ENCODE measurements at regions of chr11 and their contacts with region 1.

Region 1: GRCh38 chr11:36452236-36452940 is 57.7 kb downstream of the TRAF6 start:
- DNase-seq: no peak
- H3K4me3 Mint-ChIP-seq: peak overlapping the region; percentile 53
- H3K27ac Mint-ChIP-seq: peak overlapping the region; percentile 70
- H3K4me1 Mint-ChIP-seq: peaks cover 55% of the 10 kb centered on the region
- H3K27me3 Mint-ChIP-seq: peaks cover 6% of the 10 kb centered on the region

Region 2: DNA sequence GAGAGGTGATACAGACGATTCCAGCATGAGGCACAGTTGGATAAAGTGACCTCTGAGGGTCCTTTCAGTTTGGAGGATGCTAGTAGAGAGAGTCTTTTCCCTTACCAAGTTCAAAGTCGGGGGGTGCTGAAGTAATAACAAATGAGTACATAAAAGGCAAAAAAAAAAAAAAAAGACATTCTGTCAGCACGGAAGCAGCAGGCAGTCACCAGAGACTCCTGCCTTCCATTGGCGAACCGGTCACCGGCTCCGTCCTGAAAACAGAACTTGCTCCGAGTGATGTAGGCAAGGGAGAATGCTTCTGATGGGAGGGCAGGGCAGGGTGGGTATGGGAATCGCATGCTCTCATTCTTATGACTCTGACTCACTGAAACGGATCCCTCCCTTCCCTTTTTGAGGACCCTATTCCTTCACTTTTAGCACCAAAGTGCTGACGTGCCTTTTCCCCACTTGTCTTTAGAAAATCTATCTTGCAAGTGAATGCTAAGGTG is 90.4 kb before region 1 on chr11:
- intact Hi-C with region 1: no loop called
- DNase-seq: no peak
- H3K4me3 Mint-ChIP-seq: peak overlapping the region; percentile 31
- H3K27ac Mint-ChIP-seq: no peak overlapping the region
- H3K4me1 Mint-ChIP-seq: peaks cover 49% of the 10 kb centered on the region
- H3K27me3 Mint-ChIP-seq: peaks cover 36% of the 10 kb centered on the region

Region 3: GRCh38 chr11:36376888-36377758 is 75.3 kb before region 1 on chr11:
- intact Hi-C with region 1: loop called (anchors 2 kb)
- DNase-seq: peak; percentile 49
- H3K4me3 Mint-ChIP-seq: peak overlapping the region; percentile 89
- H3K27ac Mint-ChIP-seq: peak overlapping the region; percentile 81
- H3K4me1 Mint-ChIP-seq: peaks cover 28% of the 10 kb centered on the region
- H3K27me3 Mint-ChIP-seq: peaks cover 65% of the 10 kb centered on the region

Region 4: GRCh38 chr11:36421546-36422155 is 30.7 kb before region 1 on chr11:
- intact Hi-C with region 1: loop called (anchors 1 kb)
- DNase-seq: no peak
- H3K4me3 Mint-ChIP-seq: peak overlapping the region; percentile 10
- H3K27ac Mint-ChIP-seq: peak overlapping the region; percentile 70
- H3K4me1 Mint-ChIP-seq: peaks cover 56% of the 10 kb centered on the region
- H3K27me3 Mint-ChIP-seq: peaks cover 8% of the 10 kb centered on the region

Region 5: DNA sequence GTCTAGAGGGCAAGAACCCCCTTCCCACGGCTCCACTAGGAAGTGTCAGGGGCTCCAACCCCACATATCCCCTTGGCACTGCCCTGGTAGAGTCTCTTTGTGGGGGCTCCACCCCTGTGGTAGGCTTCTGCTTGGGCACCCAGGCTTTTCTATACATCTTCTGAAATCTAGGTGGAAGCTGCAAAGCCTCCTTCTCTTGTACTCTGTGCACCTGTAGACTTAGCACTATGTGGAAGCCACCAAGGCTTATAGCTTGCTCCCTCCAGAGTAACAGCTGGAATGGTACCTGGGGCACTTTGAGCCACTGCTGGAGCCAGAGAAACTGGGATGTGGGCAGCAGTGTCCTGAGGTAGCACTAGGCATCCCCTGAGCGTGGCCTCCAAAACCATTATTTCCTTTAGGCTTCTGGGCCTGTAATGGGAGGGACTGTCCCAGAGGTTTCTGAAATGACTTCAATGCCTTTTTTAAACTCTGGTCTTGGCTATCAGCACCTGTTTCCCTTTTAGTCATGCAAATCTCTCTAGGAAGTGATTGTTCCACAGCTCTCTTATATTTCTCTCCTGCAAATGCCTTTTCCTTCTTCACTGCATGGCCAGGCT is 10.7 kb before region 1 on chr11:
- intact Hi-C with region 1: loop called (anchors 1 kb)
- DNase-seq: no peak
- H3K4me3 Mint-ChIP-seq: no peak overlapping the region
- H3K27ac Mint-ChIP-seq: no peak overlapping the region
- H3K4me1 Mint-ChIP-seq: peaks cover 11% of the 10 kb centered on the region
- H3K27me3 Mint-ChIP-seq: peaks cover 24% of the 10 kb centered on the region

Measured in activated T-helper 2 cell treated with anti-CD3 and anti-CD28 coated beads, Interferon-gamma antibody, Interleukin-2, Interleukin-4, amounts not matched to agents 10 μg/mL and 5 μg/mL and 100 μg/mL, durations not matched to agents 14 hours and 24 hours and 36 hours (primary cell).